Activated T-helper 2 cell treated with anti-CD3 and anti-CD28 coated beads, Interferon-gamma antibody, Interleukin-2, Interleukin-4, amounts not matched to agents 10 μg/mL and 5 μg/mL and 100 μg/mL, durations not matched to agents 14 hours and 24 hours and 36 hours (primary cell): ENCODE measurements at regions of chr1 and their contacts with region 1.

Region 1: GRCh38 chr1:12296623-12297022 is 66.8 kb downstream of the VPS13D start:
- DNase-seq: no peak
- H3K4me3 Mint-ChIP-seq: peak overlapping the region; percentile 17
- H3K27ac Mint-ChIP-seq: peak overlapping the region; percentile 63
- H3K4me1 Mint-ChIP-seq: peaks cover 40% of the 10 kb centered on the region
- H3K27me3 Mint-ChIP-seq: no peaks in the 10 kb centered on the region

Region 2: GRCh38 chr1:11749203-11749689 is 547.4 kb before region 1 on chr1:
- intact Hi-C with region 1: no loop called
- DNase-seq: peak; percentile 15
- H3K4me3 Mint-ChIP-seq: no peak overlapping the region
- H3K27ac Mint-ChIP-seq: no peak overlapping the region
- H3K4me1 Mint-ChIP-seq: peaks cover 10% of the 10 kb centered on the region
- H3K27me3 Mint-ChIP-seq: no peaks in the 10 kb centered on the region

Region 3: GRCh38 chr1:12153181-12153785 is 143.3 kb before region 1 on chr1:
- intact Hi-C with region 1: no loop called
- DNase-seq: no peak
- H3K4me3 Mint-ChIP-seq: no peak overlapping the region
- H3K27ac Mint-ChIP-seq: no peak overlapping the region
- H3K4me1 Mint-ChIP-seq: peaks cover 81% of the 10 kb centered on the region
- H3K27me3 Mint-ChIP-seq: no peaks in the 10 kb centered on the region

Region 4: GRCh38 chr1:12344596-12345349 is 48.1 kb after region 1 on chr1:
- intact Hi-C with region 1: loop called (anchors 1 kb)
- DNase-seq: no peak
- H3K4me3 Mint-ChIP-seq: peak overlapping the region; percentile 61
- H3K27ac Mint-ChIP-seq: peak overlapping the region; percentile 88
- H3K4me1 Mint-ChIP-seq: peaks cover 53% of the 10 kb centered on the region
- H3K27me3 Mint-ChIP-seq: no peaks in the 10 kb centered on the region